ENCODE measurements at regions of chr10 and their contacts with region 1.

Region 1: DNA sequence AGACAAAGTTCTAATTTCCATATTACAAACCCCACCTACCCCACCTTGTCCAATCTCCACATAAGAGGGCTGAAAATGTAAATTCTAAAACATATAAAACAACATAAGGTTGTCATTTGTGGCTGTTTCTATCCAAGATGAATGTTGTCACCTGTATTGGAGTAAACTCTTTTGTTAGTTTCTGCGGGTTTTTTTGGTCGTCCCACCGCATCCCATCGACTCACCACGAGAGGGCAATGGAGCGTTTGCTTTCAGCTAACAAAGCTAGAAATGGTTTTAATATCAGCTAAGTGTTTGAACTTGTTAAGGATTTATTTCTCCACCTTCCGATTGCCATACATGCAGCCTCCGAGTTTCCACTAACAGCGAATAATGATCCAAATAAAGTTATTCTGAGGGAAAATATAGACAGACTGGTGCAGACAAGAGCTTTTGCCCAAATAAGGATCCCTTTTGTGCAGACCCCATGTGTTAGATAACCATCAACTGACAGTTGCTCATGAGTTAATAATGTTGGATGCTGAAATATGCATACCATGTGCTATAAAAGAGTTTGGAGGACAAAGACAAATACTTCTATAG is 137.2 kb downstream of the ARID5B start:
- DNase-seq: peak; percentile 78
- H3K4me3 Mint-ChIP-seq: peak overlapping the region; percentile 30
- H3K27ac Mint-ChIP-seq: peak overlapping the region; percentile 52
- H3K4me1 Mint-ChIP-seq: peaks cover 41% of the 10 kb centered on the region
- H3K27me3 Mint-ChIP-seq: no peaks in the 10 kb centered on the region
- CTCF ChIP-seq: peak; percentile 76

Region 2: DNA sequence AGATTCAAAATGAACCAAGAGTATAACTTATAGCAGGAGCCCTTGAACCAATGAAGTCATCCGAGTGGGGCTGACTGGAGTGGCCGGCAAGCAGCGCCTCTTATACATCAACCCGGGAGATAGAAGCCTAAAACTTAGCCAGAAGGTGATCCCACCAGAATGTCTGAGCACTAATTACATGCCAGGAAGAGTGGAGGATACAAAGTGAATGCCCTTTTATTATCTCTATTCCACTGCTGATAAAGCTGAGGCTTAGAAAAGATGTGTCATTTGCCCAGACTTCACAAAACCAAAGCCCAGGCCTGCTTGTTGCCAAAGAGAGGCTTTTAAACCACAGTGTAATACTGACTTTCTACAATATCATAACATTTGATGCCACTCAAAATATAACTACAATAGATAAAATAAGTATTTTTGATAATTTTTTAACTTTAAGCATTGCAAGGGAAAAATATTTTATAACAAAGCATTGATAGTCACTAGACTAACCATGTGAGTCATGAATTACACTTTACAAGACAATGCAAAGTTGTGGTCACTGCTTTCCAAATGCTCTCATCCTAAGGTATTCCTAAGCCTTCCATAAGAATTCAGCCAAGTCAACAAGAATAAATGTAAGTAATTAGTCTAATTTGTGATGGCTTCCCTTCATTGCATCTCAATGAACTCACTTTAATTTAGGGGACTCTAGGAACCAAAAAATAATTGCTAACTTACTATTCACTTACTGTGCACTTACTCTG is 195.8 kb before region 1 on chr10:
- CTCF ChIA-PET with region 1: no interaction called
- POLR2A ChIA-PET with region 1: no interaction called
- intact Hi-C with region 1: no loop called
- DNase-seq: peak; percentile 31
- H3K4me3 Mint-ChIP-seq: no peak overlapping the region
- H3K27ac Mint-ChIP-seq: peak overlapping the region; percentile 27
- H3K4me1 Mint-ChIP-seq: no peaks in the 10 kb centered on the region
- H3K27me3 Mint-ChIP-seq: no peaks in the 10 kb centered on the region
- CTCF ChIP-seq: no peak

Region 3: DNA sequence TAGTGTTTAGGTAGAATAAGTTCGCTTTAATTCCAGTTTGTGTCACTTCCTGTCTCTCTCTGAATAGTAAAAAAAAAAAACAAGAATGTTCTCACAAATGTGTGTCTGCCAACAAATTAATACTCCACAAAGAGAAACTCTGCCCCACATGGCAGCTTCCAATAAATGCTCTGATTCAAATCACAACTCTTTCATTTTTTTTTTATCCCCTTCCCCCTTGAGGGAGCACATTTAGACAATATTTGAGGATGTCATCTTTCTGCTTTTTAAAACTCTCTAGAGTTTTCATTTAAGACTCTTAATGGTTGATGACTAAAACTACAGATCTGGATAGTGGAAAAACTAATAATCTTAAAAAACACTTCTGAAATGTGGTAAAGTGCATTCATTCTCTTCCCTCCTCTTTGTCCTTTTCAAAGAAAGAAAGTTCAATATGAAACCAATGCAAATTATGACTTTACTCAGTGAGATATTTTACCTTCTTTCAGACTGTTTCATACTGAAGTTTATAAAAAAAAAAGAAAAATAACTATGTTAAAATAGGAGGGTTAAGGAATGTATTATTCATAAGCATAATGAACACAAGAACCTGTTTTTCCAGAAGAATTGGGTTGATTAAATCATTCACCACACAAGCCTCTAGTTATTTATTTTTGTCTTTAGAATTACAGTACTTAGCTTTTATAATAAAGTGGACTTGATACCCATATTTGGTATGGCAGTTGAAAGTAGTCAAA is 94.9 kb before region 1 on chr10:
- CTCF ChIA-PET with region 1: interaction called, 3 read pairs
- POLR2A ChIA-PET with region 1: interaction called, 22 read pairs
- intact Hi-C with region 1: loop called (anchors 5 kb)
- DNase-seq: peak; percentile 51
- H3K4me3 Mint-ChIP-seq: peak overlapping the region; percentile 68
- H3K27ac Mint-ChIP-seq: peak overlapping the region; percentile 97
- H3K4me1 Mint-ChIP-seq: peaks cover 19% of the 10 kb centered on the region
- H3K27me3 Mint-ChIP-seq: no peaks in the 10 kb centered on the region
- CTCF ChIP-seq: no peak

Region 4: GRCh38 chr10:62050893-62051433 is 12.3 kb after region 1 on chr10:
- CTCF ChIA-PET with region 1: interaction called, 28 read pairs
- POLR2A ChIA-PET with region 1: interaction called, 79 read pairs
- intact Hi-C with region 1: no loop called
- DNase-seq: peak; percentile 90
- H3K4me3 Mint-ChIP-seq: peak overlapping the region; percentile 84
- H3K27ac Mint-ChIP-seq: peak overlapping the region; percentile 96
- H3K4me1 Mint-ChIP-seq: peaks cover 28% of the 10 kb centered on the region
- H3K27me3 Mint-ChIP-seq: no peaks in the 10 kb centered on the region
- CTCF ChIP-seq: no peak

Region 5: GRCh38 chr10:62194924-62195674 is 156.4 kb after region 1 on chr10:
- CTCF ChIA-PET with region 1: interaction called, 3 read pairs
- POLR2A ChIA-PET with region 1: interaction called, 3 read pairs
- intact Hi-C with region 1: loop called (anchors 1 kb)
- DNase-seq: no peak
- H3K4me3 Mint-ChIP-seq: no peak overlapping the region
- H3K27ac Mint-ChIP-seq: no peak overlapping the region
- H3K4me1 Mint-ChIP-seq: peaks cover 7% of the 10 kb centered on the region
- H3K27me3 Mint-ChIP-seq: no peaks in the 10 kb centered on the region
- CTCF ChIP-seq: no peak